HCT116 (cell line): ENCODE measurements at regions of chr1 and their contacts with region 1.

Region 1: DNA sequence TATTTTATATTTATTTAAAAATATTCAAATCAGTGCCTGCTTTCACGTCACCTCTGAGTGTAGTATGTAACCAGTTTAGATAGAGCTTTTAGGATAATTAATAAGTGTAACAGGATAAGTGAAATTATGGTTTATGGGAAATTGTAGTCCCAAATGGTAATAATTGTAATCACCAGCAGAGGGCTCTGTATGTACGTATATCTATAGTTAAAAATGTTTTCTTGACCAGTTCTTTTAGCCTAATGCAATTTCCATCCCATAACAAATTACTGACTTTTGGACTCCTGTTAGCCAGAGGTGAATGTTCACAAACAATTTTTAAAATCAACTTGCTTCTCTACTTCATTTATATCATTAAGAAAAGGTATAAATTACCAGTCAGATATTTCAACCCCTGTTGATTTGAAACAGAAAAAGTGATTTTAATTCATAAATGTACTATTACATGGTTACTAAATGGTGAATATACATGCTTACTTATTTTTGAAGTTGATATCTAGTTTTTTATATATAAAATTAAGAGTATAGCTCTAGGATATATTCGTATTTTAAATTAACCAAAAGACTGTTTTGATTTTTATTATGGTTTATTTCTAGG is 25.3 kb downstream of the SLC30A7 start:
- DNase-seq: peak; percentile 22
- ATAC-seq: no peak
- H3K4me3 ChIP-seq: no peak overlapping the region
- H3K27ac ChIP-seq: no peak overlapping the region
- H3K4me1 ChIP-seq: no peaks in the 10 kb centered on the region
- H3K27me3 ChIP-seq: no peaks in the 10 kb centered on the region
- CTCF ChIP-seq: peak; percentile 34 to 69 (median 66)
- POLR2A ChIP-seq: no peak
- RAD21 ChIP-seq: peak; percentile 65

Region 2: DNA sequence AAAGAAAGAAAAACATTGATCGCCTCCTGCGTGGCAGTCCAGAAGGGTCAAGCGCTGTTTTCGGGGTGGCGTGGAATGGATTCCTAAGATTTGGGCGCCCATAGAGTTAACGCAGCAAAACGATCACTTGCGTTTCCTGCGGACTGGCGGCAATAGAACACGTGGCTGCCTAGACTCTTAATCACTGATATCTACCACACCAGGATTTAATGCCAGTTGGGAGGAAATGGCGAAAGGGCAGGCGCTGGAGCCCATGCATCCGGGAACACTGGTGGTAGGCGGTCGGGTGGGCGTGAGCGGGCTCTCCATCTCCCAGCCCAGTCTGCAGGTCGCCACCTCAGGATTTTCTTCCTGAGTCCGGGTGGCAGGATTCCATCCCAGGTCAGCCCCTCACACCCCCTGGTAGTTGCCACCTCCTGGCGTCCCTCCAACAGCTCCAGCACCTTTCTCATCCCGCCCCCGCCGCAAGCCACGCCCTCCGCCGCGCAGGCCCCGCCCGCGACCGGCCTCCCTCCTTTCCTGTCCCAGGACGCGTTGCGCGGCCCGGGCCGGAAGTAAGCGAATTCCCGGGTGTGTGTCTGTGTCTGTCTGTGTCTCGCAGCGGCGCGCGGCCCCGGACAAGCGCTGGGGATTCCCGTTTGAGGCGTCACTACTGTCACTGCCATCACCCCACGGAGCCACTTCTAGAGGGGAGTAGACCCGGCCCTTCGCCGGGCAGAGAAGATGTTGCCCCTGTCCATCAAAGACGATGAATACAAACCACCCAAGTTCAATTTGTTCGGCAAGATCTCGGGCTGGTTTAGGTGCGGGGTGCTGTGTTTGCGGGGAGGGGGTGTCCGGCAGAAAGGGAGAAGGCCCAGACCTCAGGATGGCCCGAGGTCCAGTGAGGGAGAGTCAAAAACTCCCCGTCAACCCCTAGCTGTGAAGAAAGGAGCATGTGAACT is 25.4 kb before region 1 on chr1 and contains the start of gene SLC30A7:
- CTCF ChIA-PET with region 1: no interaction called
- POLR2A ChIA-PET with region 1: no interaction called
- RAD21 ChIA-PET with region 1: no interaction called
- intact Hi-C with region 1: no loop called
- DNase-seq: peak; percentile 68
- ATAC-seq: peak; percentile 87
- H3K4me3 ChIP-seq: peak within 1 kb of the TSS; percentile 89 to 95
- H3K27ac ChIP-seq: peak within 1 kb of the TSS; percentile 93
- H3K4me1 ChIP-seq: peaks cover 10 to 11% of the 10 kb centered on the region in 2 experiments
- H3K27me3 ChIP-seq: no peaks in the 10 kb centered on the region
- CTCF ChIP-seq: 0 out of 6 replicates have a peak, but pooled peaks of 1 of the 3 experiments have one; percentile 0
- POLR2A ChIP-seq: no peak
- RAD21 ChIP-seq: no peak
- total RNA-seq, gene SLC30A7: 23.3 TPM

Region 3: DNA sequence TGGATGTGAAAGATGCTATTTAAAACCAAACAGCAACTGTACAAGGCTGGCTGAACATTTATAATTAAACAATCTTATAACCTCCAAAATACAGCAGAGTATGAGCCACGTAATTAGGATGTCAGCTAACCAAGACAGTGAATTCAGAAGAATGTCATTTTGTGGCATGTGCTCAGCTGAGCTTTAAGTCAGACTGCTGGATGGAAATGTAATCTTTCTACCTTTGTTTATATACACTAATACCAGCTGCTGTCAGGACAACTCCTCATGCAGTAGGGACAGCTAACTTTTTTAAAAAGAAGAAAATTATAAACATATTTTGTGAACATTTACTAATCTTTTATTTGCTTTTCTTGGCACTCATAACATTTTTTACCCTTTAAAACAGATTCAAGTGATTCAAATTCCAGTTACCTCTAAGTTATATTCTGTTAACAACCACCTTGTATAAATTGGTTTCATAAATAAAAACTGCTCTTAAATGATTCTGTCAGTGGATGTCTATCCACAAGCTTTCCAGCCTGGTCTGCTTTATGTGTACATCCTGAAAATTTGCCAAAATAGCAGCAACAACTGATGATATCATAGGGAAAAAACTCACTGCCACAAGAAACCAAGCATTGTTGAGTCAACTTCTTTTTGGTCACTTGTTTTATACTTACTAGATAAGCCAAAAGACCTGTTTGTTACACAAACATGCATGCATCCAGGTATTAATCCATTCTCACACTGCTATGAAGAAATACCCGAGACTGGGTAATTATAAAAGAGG is 68.3 kb after region 1 on chr1:
- CTCF ChIA-PET with region 1: no interaction called
- POLR2A ChIA-PET with region 1: no interaction called
- RAD21 ChIA-PET with region 1: no interaction called
- intact Hi-C with region 1: no loop called
- DNase-seq: no peak
- ATAC-seq: no peak
- H3K4me3 ChIP-seq: no peak overlapping the region
- H3K27ac ChIP-seq: no peak overlapping the region
- H3K4me1 ChIP-seq: no peaks in the 10 kb centered on the region
- H3K27me3 ChIP-seq: no peaks in the 10 kb centered on the region
- CTCF ChIP-seq: no peak
- POLR2A ChIP-seq: no peak
- RAD21 ChIP-seq: no peak

Region 4: GRCh38 chr1:101238681-101239094 is 317.5 kb after region 1 on chr1:
- CTCF ChIA-PET with region 1: interaction called, 7 read pairs
- POLR2A ChIA-PET with region 1: no interaction called
- RAD21 ChIA-PET with region 1: no interaction called
- intact Hi-C with region 1: loop called (anchors 2 kb)
- DNase-seq: peak; percentile 71
- ATAC-seq: peak; percentile 90
- H3K4me3 ChIP-seq: no peak overlapping the region
- H3K27ac ChIP-seq: no peak overlapping the region
- H3K4me1 ChIP-seq: peaks cover 4 to 17% of the 10 kb centered on the region in 2 experiments; a peak in 2 of 4 replicates
- H3K27me3 ChIP-seq: no peaks in the 10 kb centered on the region
- CTCF ChIP-seq: peak; percentile 66 to 96 (median 93)
- POLR2A ChIP-seq: no peak
- RAD21 ChIP-seq: peak; percentile 76

Region 5: GRCh38 chr1:101288491-101288944 is 367.3 kb after region 1 on chr1:
- CTCF ChIA-PET with region 1: interaction called, 24 read pairs
- POLR2A ChIA-PET with region 1: no interaction called
- RAD21 ChIA-PET with region 1: interaction called, 3 to 4 read pairs
- intact Hi-C with region 1: loop called (anchors 1 kb)
- DNase-seq: peak; percentile 72
- ATAC-seq: peak; percentile 94
- H3K4me3 ChIP-seq: peak overlapping the region in 1 of 2 experiments; percentile 30; a peak in 2 of 4 replicates
- H3K27ac ChIP-seq: no peak overlapping the region
- H3K4me1 ChIP-seq: peaks cover 0 to 6% of the 10 kb centered on the region in 2 experiments; a peak in 1 of 4 replicates
- H3K27me3 ChIP-seq: no peaks in the 10 kb centered on the region; the same call in 1 of the 2 replicates
- CTCF ChIP-seq: peak; percentile 74 to 98 (median 89)
- POLR2A ChIP-seq: no peak
- RAD21 ChIP-seq: peak; percentile 90

Region 6: DNA sequence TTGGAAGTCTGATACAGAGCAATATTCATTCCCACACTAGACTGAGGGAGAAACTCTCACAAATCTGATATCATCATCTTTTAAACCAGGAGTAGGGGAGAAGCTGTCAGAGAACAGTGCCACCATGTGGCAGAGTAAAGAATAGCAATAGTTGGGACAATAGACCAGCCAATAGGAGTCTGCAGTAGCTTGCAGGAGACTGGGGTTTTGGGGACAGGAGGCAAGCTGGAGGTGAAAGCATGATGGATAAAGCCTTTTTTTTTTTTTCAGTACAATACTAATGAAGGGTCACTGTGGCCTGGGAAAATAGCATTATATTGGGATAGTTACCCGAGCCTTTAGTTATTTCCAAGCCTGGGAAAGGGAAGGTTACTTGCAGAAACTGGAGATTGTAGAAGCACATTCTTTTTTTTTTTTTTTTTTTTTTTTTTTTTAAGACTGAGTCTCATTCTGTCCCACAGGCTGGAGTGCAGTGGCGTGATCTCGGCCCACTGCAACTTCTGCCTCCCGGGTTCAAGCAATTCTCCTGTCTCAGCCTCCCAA is 436.3 kb after region 1 on chr1:
- CTCF ChIA-PET with region 1: no interaction called
- POLR2A ChIA-PET with region 1: no interaction called
- RAD21 ChIA-PET with region 1: no interaction called
- intact Hi-C with region 1: loop called (anchors 1 kb)
- DNase-seq: peak; percentile 59
- ATAC-seq: peak; percentile 99
- H3K4me3 ChIP-seq: no peak overlapping the region
- H3K27ac ChIP-seq: no peak overlapping the region
- H3K4me1 ChIP-seq: no peaks in the 10 kb centered on the region
- H3K27me3 ChIP-seq: 0 out of 2 replicates have a peak, but pooled peaks cover 8% of the 10 kb centered on the region
- CTCF ChIP-seq: peak; percentile 48 to 92 (median 76); a peak in 5 of 6 replicates
- POLR2A ChIP-seq: no peak
- RAD21 ChIP-seq: peak; percentile 71